ENCODE measurements at regions of chr9 and their contacts with region 1.

Region 1: GRCh38 chr9:10059044-10059443 is 553.8 kb downstream of the PTPRD start:
- DNase-seq: no peak
- H3K4me3 ChIP-seq: no peak overlapping the region
- H3K27ac ChIP-seq: no peak overlapping the region
- H3K4me1 ChIP-seq: peaks cover 11% of the 10 kb centered on the region
- H3K27me3 ChIP-seq: no peaks in the 10 kb centered on the region
- CTCF ChIP-seq: no peak
- POLR2A ChIP-seq: no peak

Region 2: GRCh38 chr9:9998491-9999287 is 60.4 kb before region 1 on chr9:
- CTCF ChIA-PET with region 1: interaction called, 22 read pairs
- POLR2A ChIA-PET with region 1: no interaction called
- dilution Hi-C with region 1: no loop called
- intact Hi-C with region 1: loop called (anchors 1 kb)
- DNase-seq: peak; percentile 86
- H3K4me3 ChIP-seq: peak overlapping the region in 1 of 3 experiments; percentile 30
- H3K27ac ChIP-seq: peak overlapping the region; percentile 68
- H3K4me1 ChIP-seq: peaks cover 36% of the 10 kb centered on the region
- H3K27me3 ChIP-seq: no peaks in the 10 kb centered on the region
- CTCF ChIP-seq: peak; percentile 55 to 56
- POLR2A ChIP-seq: peak; percentile 43

Region 3: GRCh38 chr9:10026443-10026984 is 32.5 kb before region 1 on chr9:
- CTCF ChIA-PET with region 1: no interaction called
- POLR2A ChIA-PET with region 1: no interaction called
- dilution Hi-C with region 1: no loop called
- intact Hi-C with region 1: no loop called
- DNase-seq: no peak
- H3K4me3 ChIP-seq: no peak overlapping the region
- H3K27ac ChIP-seq: no peak overlapping the region
- H3K4me1 ChIP-seq: no peaks in the 10 kb centered on the region
- H3K27me3 ChIP-seq: no peaks in the 10 kb centered on the region
- CTCF ChIP-seq: no peak
- POLR2A ChIP-seq: no peak

Region 4: GRCh38 chr9:10045598-10045997 is 13.4 kb before region 1 on chr9:
- CTCF ChIA-PET with region 1: interaction called, 43 read pairs
- POLR2A ChIA-PET with region 1: interaction called, 3 read pairs
- dilution Hi-C with region 1: no loop called
- intact Hi-C with region 1: no loop called
- DNase-seq: peak; percentile 58
- H3K4me3 ChIP-seq: no peak overlapping the region
- H3K27ac ChIP-seq: no peak overlapping the region
- H3K4me1 ChIP-seq: no peaks in the 10 kb centered on the region
- H3K27me3 ChIP-seq: no peaks in the 10 kb centered on the region
- CTCF ChIP-seq: peak; percentile 11 to 42
- POLR2A ChIP-seq: no peak

Region 5: GRCh38 chr9:10071579-10071978 is 12.5 kb after region 1 on chr9:
- CTCF ChIA-PET with region 1: interaction called, 14 read pairs
- POLR2A ChIA-PET with region 1: no interaction called
- dilution Hi-C with region 1: no loop called
- intact Hi-C with region 1: no loop called
- DNase-seq: no peak
- H3K4me3 ChIP-seq: no peak overlapping the region
- H3K27ac ChIP-seq: no peak overlapping the region
- H3K4me1 ChIP-seq: no peaks in the 10 kb centered on the region
- H3K27me3 ChIP-seq: no peaks in the 10 kb centered on the region
- CTCF ChIP-seq: no peak
- POLR2A ChIP-seq: no peak

Region 6: DNA sequence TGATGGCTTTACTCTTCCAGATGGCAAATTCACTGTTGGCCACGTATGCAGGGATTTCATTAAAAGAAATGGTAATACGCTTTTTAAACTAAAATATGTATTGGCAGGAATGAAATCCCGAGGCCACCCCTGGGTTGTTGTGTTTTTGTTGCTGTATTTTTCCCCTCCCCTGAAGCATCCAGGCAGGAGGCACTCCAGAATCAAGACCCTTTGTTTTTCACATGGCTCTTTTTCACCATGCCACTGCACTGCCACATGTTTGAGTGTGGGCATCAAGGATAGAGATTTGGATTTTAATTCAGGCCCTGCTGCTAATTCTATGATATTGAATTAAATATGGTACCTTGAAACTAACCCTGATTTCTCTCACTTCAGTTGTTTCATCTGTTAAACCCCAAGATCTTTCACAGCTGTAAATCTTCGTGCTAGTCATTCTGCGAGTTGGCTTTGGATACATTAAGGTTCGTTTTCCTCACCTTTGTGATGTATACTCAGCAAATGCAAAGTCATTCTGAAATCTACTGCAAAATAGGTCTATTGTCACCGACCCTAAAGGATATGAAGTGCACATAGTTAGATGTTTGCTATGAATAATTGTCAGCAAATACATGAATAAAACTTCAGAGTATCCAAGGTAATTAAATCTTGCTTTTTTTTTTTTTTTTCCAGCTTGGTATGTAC is 20.4 kb after region 1 on chr9:
- CTCF ChIA-PET with region 1: interaction called, 12 read pairs
- POLR2A ChIA-PET with region 1: no interaction called
- dilution Hi-C with region 1: no loop called
- intact Hi-C with region 1: no loop called
- DNase-seq: no peak
- H3K4me3 ChIP-seq: no peak overlapping the region
- H3K27ac ChIP-seq: no peak overlapping the region
- H3K4me1 ChIP-seq: no peaks in the 10 kb centered on the region
- H3K27me3 ChIP-seq: no peaks in the 10 kb centered on the region
- CTCF ChIP-seq: no peak
- POLR2A ChIP-seq: no peak

Region 7: DNA sequence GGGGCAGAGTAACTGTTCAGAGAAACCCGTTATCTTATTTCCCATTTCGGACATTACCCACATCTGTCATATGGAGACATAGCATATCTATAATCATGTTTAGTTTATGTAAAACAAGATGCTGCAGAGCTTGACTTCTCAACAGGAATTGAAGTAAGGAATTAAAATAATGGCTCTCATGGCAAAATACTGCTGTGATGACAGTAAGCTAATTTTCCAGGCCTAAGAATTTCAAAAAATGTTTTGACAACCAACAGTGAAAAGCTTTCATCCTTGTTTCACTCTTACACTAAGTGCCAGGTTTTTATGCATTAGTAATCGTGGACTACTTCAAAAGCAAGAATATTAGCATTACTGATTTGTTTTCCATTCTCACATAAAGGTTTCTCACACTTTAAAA is 35.5 kb after region 1 on chr9:
- CTCF ChIA-PET with region 1: no interaction called
- POLR2A ChIA-PET with region 1: no interaction called
- dilution Hi-C with region 1: no loop called
- intact Hi-C with region 1: no loop called
- DNase-seq: no peak
- H3K4me3 ChIP-seq: no peak overlapping the region
- H3K27ac ChIP-seq: no peak overlapping the region
- H3K4me1 ChIP-seq: no peaks in the 10 kb centered on the region
- H3K27me3 ChIP-seq: no peaks in the 10 kb centered on the region
- CTCF ChIP-seq: no peak
- POLR2A ChIP-seq: no peak

Region 8: GRCh38 chr9:10274988-10275387 is 215.9 kb after region 1 on chr9:
- CTCF ChIA-PET with region 1: interaction called, 91 read pairs
- POLR2A ChIA-PET with region 1: no interaction called
- dilution Hi-C with region 1: no loop called
- intact Hi-C with region 1: no loop called
- DNase-seq: peak; percentile 35
- H3K4me3 ChIP-seq: no peak overlapping the region
- H3K27ac ChIP-seq: no peak overlapping the region
- H3K4me1 ChIP-seq: no peaks in the 10 kb centered on the region
- H3K27me3 ChIP-seq: no peaks in the 10 kb centered on the region
- CTCF ChIP-seq: peak; percentile 7 to 19
- POLR2A ChIP-seq: no peak

Region 9: DNA sequence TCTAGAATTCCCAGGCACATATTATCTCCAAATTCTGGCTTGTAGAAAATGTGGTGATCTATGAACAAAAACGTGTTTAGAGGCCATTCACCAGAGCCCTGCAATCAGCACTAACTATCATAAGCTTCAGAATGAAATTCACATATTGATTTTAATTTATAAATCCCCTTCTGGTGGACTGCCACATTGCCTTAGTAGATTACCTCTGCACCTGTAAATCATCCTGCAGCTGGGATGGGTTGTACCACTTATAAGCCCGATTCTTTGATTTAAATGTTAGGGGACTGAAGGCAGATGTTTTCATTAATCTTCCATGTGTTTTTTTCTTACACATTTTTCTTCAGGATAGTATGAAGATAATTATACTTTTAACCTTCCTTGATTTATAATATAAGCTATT is 694.4 kb after region 1 on chr9:
- CTCF ChIA-PET with region 1: no interaction called
- POLR2A ChIA-PET with region 1: no interaction called
- dilution Hi-C with region 1: no loop called
- intact Hi-C with region 1: no loop called
- DNase-seq: no peak
- H3K4me3 ChIP-seq: no peak overlapping the region
- H3K27ac ChIP-seq: no peak overlapping the region
- H3K4me1 ChIP-seq: no peaks in the 10 kb centered on the region
- H3K27me3 ChIP-seq: no peaks in the 10 kb centered on the region
- CTCF ChIP-seq: no peak
- POLR2A ChIP-seq: no peak